Posterior vena cava (tissue), 2 donors: ENCODE measurements at regions of chr7 and their contacts with region 1.

Region 1: GRCh38 chr7:32164346-32164957 is 94.2 kb upstream of the PDE1C start:
- DNase-seq: no peak

Region 2: GRCh38 chr7:31883761-31884164 is 280.7 kb before region 1 on chr7:
- intact Hi-C with region 1: loop called in 1 of 2 experiments (anchors 5 kb)
- DNase-seq: no peak

Region 3: GRCh38 chr7:32093415-32094408 is 70.7 kb before region 1 on chr7:
- intact Hi-C with region 1: loop called in 1 of 2 experiments (anchors 5 kb)
- DNase-seq: peak; percentile 90

Region 4: DNA sequence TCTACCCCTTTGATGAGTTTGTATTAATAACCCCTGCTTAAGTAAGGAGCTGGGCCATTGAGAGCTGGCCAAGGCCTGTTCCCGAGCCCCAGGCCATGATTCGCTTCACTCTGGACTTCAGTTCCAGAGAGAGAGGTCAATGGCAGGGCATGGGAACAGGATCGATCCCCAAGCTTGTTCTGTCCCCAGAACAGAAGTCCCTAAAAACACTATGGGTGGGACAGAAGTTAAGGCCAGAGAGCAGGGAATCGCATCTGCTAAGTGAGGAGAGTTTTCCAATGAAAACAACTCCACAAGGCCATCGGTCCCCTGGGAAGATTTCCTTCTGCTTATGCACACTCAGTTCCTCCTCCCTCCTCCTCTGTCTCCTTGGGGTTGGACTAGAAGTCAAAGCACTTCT is 166.2 kb after region 1 on chr7:
- intact Hi-C with region 1: no loop called
- DNase-seq: no peak